ENCODE measurements at regions of chr5 and their contacts with region 1.

Region 1: GRCh38 chr5:137498736-137499505 is at the start of gene SPOCK1:
- DNase-seq: peak; percentile 90
- total RNA-seq, gene SPOCK1: 100 to 106 TPM

Region 2: GRCh38 chr5:137310051-137310730 is 188.7 kb before region 1 on chr5:
- intact Hi-C with region 1: loop called in 1 of 2 experiments (anchors 10 kb)
- DNase-seq: no peak

Region 3: GRCh38 chr5:137336565-137337120 is 162.3 kb before region 1 on chr5:
- intact Hi-C with region 1: loop called in 1 of 2 experiments (anchors 10 kb)
- DNase-seq: no peak